ENCODE measurements at regions of chr7 and their contacts with region 1.

Region 1: GRCh38 chr7:12066521-12066920 is 144.6 kb upstream of the TMEM106B start:
- DNase-seq: no peak
- ATAC-seq: no peak
- H3K4me3 Mint-ChIP-seq: no peak overlapping the region
- H3K27ac Mint-ChIP-seq: no peak overlapping the region
- H3K4me1 Mint-ChIP-seq: no peaks in the 10 kb centered on the region
- H3K27me3 Mint-ChIP-seq: peaks cover 2% of the 10 kb centered on the region

Region 2: GRCh38 chr7:12322284-12322902 is 255.9 kb after region 1 on chr7:
- CTCF ChIA-PET with region 1: interaction called, 12 read pairs
- DNase-seq: no peak
- ATAC-seq: no peak
- H3K4me3 Mint-ChIP-seq: no peak overlapping the region
- H3K27ac Mint-ChIP-seq: no peak overlapping the region
- H3K4me1 Mint-ChIP-seq: no peaks in the 10 kb centered on the region
- H3K27me3 Mint-ChIP-seq: peaks cover 4% of the 10 kb centered on the region